OCI-LY7 (cell line): ENCODE measurements at regions of chr13 and their contacts with region 1.

Region 1: GRCh38 chr13:79336966-79337365 is 69.1 kb downstream of the RBM26 start:
- DNase-seq: no peak
- H3K4me3 ChIP-seq: no peak overlapping the region
- H3K27ac ChIP-seq: no peak overlapping the region
- H3K4me1 ChIP-seq: no peaks in the 10 kb centered on the region
- CTCF ChIP-seq: no peak

Region 2: DNA sequence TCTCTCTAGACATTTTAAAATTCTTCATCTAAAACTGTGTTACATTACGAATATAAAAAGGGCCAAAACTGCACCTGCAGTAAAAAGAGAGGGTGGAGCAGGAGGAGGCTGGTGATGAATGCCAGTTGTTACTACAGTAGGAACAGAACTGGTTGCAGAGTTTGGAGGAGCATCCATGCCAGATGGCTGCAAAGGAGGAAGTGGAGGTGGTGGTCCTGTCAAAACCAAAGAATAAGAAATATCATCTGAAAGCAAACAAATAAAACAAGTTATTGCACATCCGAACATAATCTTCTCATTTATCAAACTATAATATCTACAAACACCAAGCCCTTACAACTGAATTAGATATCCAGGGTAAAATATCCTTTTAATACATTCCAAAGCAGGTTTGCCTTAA is 29.0 kb after region 1 on chr13:
- CTCF ChIA-PET with region 1: no interaction called
- POLR2A ChIA-PET with region 1: interaction called, 3 read pairs
- intact Hi-C with region 1: loop called (anchors 5 kb)
- DNase-seq: no peak
- H3K4me3 ChIP-seq: no peak overlapping the region
- H3K27ac ChIP-seq: no peak overlapping the region
- H3K4me1 ChIP-seq: no peaks in the 10 kb centered on the region
- CTCF ChIP-seq: no peak

Region 3: GRCh38 chr13:79379274-79379673 is 42.3 kb after region 1 on chr13:
- CTCF ChIA-PET with region 1: no interaction called
- POLR2A ChIA-PET with region 1: interaction called, 4 read pairs
- intact Hi-C with region 1: loop called (anchors 5 kb)
- DNase-seq: no peak
- H3K4me3 ChIP-seq: no peak overlapping the region
- H3K27ac ChIP-seq: no peak overlapping the region
- H3K4me1 ChIP-seq: peaks cover 22% of the 10 kb centered on the region
- CTCF ChIP-seq: no peak

Region 4: GRCh38 chr13:79385694-79386093 is 48.7 kb after region 1 on chr13:
- CTCF ChIA-PET with region 1: no interaction called
- POLR2A ChIA-PET with region 1: interaction called, 4 read pairs
- intact Hi-C with region 1: loop called (anchors 5 kb)
- DNase-seq: no peak
- H3K4me3 ChIP-seq: no peak overlapping the region
- H3K27ac ChIP-seq: no peak overlapping the region
- H3K4me1 ChIP-seq: peaks cover 52% of the 10 kb centered on the region
- CTCF ChIP-seq: no peak

Region 5: DNA sequence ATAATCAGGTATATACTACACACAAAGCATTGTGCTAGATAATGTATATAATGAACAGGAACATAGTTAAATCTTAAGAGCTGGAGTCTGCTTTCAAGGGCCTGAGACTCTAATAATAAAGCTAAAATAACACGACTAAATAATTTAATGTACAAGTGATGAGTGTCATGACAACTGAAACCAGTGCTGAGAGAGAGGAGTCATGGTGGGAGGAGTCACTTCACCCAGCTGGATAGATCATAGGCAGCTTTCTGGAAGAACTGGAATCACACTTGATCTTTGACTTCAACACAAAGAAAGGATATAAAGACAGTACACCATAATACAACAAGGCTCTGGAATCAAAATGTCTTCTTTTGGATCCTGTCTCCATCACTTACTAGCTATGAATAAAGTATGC is 61.9 kb after region 1 on chr13:
- CTCF ChIA-PET with region 1: no interaction called
- POLR2A ChIA-PET with region 1: no interaction called
- intact Hi-C with region 1: no loop called
- DNase-seq: no peak
- H3K4me3 ChIP-seq: no peak overlapping the region
- H3K27ac ChIP-seq: no peak overlapping the region
- H3K4me1 ChIP-seq: peaks cover 37% of the 10 kb centered on the region
- CTCF ChIP-seq: no peak

Region 6: GRCh38 chr13:79522583-79522982 is 185.6 kb after region 1 on chr13:
- CTCF ChIA-PET with region 1: no interaction called
- POLR2A ChIA-PET with region 1: no interaction called
- intact Hi-C with region 1: no loop called
- DNase-seq: no peak
- H3K4me3 ChIP-seq: no peak overlapping the region
- H3K27ac ChIP-seq: no peak overlapping the region
- H3K4me1 ChIP-seq: no peaks in the 10 kb centered on the region
- CTCF ChIP-seq: no peak

Region 7: DNA sequence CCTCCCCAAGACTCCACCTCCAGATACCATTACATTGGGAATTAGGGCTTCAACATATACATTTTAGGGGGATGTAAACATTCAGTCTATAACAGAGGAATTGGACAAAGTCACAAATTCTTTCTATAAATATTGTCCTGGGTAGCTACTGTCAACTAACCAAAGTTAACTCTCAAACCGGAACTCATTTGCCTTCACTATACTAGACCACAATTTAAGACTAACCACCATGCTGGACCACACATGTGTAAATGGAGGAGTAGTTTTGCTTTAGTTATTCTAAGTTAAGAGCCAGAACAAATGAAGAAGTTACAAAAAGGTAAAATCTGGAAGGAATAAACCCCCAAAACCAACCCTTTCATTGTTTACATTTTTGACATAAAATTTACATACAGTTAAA is 366.8 kb after region 1 on chr13:
- CTCF ChIA-PET with region 1: no interaction called
- POLR2A ChIA-PET with region 1: no interaction called
- intact Hi-C with region 1: no loop called
- DNase-seq: no peak
- H3K4me3 ChIP-seq: no peak overlapping the region
- H3K27ac ChIP-seq: no peak overlapping the region
- H3K4me1 ChIP-seq: no peaks in the 10 kb centered on the region
- CTCF ChIP-seq: no peak